ENCODE measurements at regions of chr4 and their contacts with region 1.

Region 1: GRCh38 chr4:168923526-168924194 is 86.4 kb downstream of the CBR4 start:
- DNase-seq: peak in 1 of 3 donors; percentile 88
- ATAC-seq: peak; percentile 92
- H3K4me3 ChIP-seq: no peak overlapping the region
- H3K4me1 ChIP-seq: no peaks in the 10 kb centered on the region
- CTCF ChIP-seq: peak; percentile 7

Region 2: DNA sequence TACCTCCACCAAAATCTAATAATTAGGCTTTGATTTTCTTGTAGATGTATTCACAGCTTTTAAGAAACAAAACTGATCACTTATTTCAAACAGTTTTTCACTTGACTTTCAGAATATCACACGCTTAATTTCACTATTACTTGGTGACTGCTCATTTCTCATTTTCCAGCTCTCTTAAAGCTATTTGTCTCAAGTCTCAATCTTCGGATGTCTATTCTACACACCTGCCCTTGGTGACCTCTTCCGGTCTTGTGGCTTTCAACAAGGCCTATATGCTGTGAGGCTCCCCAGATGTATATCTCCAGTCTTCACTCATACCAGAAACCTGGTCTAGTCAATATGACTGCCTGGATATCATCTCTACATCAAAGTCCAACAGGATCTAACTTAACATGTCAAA is 866.2 kb before region 1 on chr4:
- intact Hi-C with region 1: no loop called
- DNase-seq: no peak
- ATAC-seq: no peak
- H3K4me3 ChIP-seq: no peak overlapping the region
- H3K4me1 ChIP-seq: no peaks in the 10 kb centered on the region
- CTCF ChIP-seq: no peak

Region 3: DNA sequence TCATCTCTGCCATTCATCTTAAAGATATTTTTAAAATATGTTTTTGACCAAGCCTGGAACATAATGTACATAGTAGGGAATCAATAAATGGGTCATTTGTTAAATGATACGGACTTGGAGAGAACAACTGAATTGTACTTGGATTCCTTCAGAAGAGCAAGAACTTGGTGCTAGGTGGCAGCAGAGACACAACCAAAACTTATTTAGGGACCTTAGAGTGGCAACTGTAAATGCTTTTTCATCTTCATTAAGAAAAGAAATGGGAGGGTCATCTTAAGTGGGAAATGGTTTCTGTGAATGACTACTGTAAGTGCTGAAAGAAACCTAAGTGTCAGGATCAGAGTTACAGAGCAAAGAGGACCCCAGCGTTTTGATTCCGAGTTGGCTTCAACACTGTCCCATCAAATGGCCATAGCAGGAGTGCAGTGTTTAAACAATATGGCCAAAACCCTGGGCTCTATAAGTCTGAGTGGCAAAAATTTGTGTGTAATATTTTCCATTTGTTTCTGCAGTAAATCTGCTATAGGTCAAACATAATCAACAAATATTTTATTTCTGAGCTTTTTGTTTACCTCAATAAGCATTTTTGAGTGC is 213.2 kb before region 1 on chr4:
- intact Hi-C with region 1: loop called (anchors 10 kb)
- DNase-seq: peak in 1 of 3 donors; percentile 72
- ATAC-seq: no peak
- H3K4me3 ChIP-seq: no peak overlapping the region
- H3K4me1 ChIP-seq: no peaks in the 10 kb centered on the region
- CTCF ChIP-seq: no peak

Region 4: GRCh38 chr4:168731006-168731636 is 192.5 kb before region 1 on chr4:
- intact Hi-C with region 1: no loop called
- DNase-seq: no peak
- ATAC-seq: no peak
- H3K4me3 ChIP-seq: no peak overlapping the region
- H3K4me1 ChIP-seq: no peaks in the 10 kb centered on the region
- CTCF ChIP-seq: no peak

Region 5: GRCh38 chr4:169009286-169010124 is 85.8 kb after region 1 on chr4:
- intact Hi-C with region 1: loop called in 1 of 2 experiments (anchors 10 kb)
- DNase-seq: peak; percentile 77 to 83 (median 81)
- ATAC-seq: peak; percentile 71
- H3K4me3 ChIP-seq: peak overlapping the region; percentile 44
- H3K4me1 ChIP-seq: peaks cover 19% of the 10 kb centered on the region
- CTCF ChIP-seq: no peak

Region 6: DNA sequence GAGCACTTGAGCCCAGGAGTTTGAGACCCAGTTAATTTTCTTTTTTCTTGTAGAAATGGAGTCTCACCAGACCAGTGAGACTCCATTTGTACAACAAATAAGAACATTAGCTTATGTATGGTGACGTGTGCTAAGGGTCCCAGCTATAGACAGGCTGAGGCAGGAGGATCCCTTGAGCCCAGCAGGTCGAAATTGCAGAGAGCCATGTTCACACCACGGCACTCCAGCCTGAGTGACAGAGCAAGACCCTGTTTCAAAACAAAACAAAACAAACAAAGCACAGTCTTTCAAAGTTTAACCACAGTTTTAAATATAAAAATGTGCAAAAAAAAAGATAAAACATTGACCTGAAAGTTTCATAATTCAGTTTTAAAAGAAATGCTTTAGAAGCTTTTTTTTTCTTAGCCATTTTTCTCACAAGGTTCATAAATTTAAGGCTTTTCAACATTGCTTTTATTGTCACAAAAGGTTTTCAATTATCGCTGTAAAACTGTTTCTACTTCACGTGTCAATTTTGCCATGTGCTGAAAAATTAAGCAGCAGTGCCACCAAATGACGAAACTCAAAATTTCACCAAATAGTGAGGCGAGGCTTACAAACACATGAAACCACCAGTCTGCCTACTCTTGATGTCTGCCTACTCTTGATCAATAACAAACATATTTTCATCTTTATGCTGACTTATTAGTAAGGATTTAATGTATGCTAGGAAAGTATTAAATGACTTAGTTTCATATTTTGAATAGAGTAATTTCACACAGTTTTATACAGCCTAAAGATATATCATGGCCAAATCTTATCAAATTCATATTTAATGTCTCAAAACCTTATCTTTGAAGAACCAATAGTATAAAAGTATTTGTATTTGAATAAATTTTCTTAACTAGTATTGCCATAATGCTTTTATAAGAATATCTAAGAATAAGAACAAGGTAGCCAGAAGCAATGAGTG is 562.4 kb after region 1 on chr4:
- intact Hi-C with region 1: loop called in 1 of 2 experiments (anchors 2 kb)
- DNase-seq: peak in 1 of 3 donors; percentile 71
- ATAC-seq: peak; percentile 61
- H3K4me3 ChIP-seq: no peak overlapping the region
- H3K4me1 ChIP-seq: no peaks in the 10 kb centered on the region
- CTCF ChIP-seq: no peak

Region 7: DNA sequence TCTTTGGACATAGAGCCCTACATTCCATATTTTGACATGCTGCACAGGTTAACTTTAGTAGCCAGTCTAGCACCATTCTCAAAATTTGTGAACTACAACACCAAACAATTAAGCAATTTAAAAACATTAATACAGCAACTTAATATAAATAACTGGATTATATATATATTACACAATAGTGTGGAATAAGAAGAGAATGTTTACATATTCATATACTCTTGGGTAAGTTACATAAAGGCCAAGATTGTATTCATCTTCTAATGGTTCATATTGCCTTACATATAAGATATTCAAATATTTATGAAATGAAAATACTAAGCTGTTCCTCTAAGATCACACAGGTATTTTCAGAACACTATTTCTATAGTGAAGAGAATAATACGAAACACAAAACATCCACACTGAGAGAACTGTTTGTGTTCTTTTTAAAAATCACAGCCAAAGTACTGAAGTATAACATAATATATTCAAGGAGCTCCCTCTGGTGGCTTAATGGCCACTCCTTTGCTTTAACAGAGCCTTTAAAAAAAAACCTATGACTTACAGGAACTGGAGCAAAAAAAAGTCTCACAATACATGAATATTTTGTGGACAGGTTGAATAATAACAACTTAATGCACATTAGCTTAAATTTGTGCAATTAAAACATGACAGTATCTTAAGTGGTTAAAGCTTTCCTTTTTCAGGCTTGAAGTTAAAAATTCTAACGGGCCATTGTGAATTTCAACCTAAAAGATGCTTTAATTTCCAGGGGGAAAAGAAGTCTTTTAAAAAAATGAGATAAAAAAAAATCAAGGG is 642.6 kb after region 1 on chr4:
- intact Hi-C with region 1: loop called in 1 of 2 experiments (anchors 10 kb)
- DNase-seq: peak in 1 of 3 donors; percentile 76
- ATAC-seq: peak; percentile 56
- H3K4me3 ChIP-seq: no peak overlapping the region
- H3K4me1 ChIP-seq: no peaks in the 10 kb centered on the region
- CTCF ChIP-seq: peak; percentile 19